ENCODE measurements at regions of chr18 and their contacts with region 1.

Region 1: GRCh38 chr18:54983041-54983686 is 23.9 kb upstream of the CCDC68 start:
- DNase-seq: peak; percentile 76
- H3K4me3 ChIP-seq: no peak overlapping the region
- H3K27ac ChIP-seq: no peak overlapping the region
- H3K4me1 ChIP-seq: no peaks in the 10 kb centered on the region
- H3K27me3 ChIP-seq: no peaks in the 10 kb centered on the region

Region 2: GRCh38 chr18:54416436-54416835 is 566.7 kb before region 1 on chr18:
- in situ Hi-C with region 1: loop called (anchors 25 kb)
- DNase-seq: peak; percentile 61
- H3K4me3 ChIP-seq: no peak overlapping the region
- H3K27ac ChIP-seq: no peak overlapping the region
- H3K4me1 ChIP-seq: peaks cover 7% of the 10 kb centered on the region
- H3K27me3 ChIP-seq: peaks cover 4% of the 10 kb centered on the region; the same call in 1 of the 2 replicates

Region 3: GRCh38 chr18:54679318-54680149 is 303.6 kb before region 1 on chr18:
- in situ Hi-C with region 1: loop called (anchors 5 kb)
- DNase-seq: peak; percentile 82
- H3K4me3 ChIP-seq: no peak overlapping the region
- H3K27ac ChIP-seq: no peak overlapping the region
- H3K4me1 ChIP-seq: no peaks in the 10 kb centered on the region
- H3K27me3 ChIP-seq: no peaks in the 10 kb centered on the region

Measured in GM23248 (cell line).